Activated CD4-positive, alpha-beta T cell treated with anti-CD3 and anti-CD28 coated beads for 36 hours (primary cell): ENCODE measurements at regions of chr2 and their contacts with region 1.

Region 1: DNA sequence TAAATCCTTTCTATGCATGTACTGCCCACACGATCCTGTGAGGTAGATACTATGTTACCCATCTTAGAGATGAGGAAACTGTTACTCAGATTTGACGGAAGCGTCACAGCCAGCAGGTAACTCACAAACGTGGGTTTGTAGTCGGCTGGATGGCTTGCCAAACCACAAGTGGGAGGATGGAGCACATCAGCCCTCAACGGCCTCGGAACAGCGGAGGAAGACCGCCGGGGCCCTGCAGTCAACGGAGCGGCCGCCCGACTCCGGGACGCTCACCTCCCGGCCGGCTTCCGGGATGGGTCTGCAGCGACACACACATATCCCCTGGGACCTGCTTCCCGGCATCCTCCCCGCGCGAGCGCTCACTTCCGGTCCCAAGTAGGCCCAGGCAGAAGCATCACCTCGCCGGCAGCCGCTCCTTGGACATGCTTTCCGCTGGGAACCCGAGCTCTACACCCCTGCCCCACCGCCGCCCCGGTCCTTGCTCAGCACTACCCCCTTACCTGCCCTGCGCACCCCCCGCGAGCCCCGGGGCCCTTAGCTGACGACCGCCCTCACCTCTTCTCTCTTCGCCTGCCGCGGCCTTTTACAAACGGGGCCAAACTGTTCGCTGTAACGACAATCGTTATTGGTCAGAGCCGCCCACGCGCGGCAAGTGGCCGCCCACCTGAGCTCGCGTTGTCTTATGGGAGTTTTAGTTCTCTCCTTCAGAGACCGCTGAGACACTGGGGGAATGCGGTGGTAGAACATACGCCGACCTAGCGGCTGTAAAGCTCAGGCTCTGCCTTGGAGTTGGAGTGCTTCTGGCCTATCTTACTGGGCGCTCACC is at the start of gene C2orf42:
- DNase-seq: peak; percentile 98
- ATAC-seq: peak; percentile 91
- H3K4me3 Mint-ChIP-seq: peak within 1 kb of the TSS; percentile 84
- H3K27ac Mint-ChIP-seq: peak within 1 kb of the TSS; percentile 97
- H3K4me1 Mint-ChIP-seq: peaks cover 16% of the 10 kb centered on the region
- H3K27me3 Mint-ChIP-seq: no peaks in the 10 kb centered on the region
- total RNA-seq, gene C2orf42: 22.6 to 23.3 TPM

Region 2: GRCh38 chr2:70070541-70071268 is 119.9 kb before region 1 on chr2:
- CTCF ChIA-PET with region 1: interaction called, 3 read pairs
- POLR2A ChIA-PET with region 1: interaction called, 12 read pairs
- intact Hi-C with region 1: loop called (anchors 1 kb)
- DNase-seq: peak; percentile 73
- ATAC-seq: peak; percentile 60
- H3K4me3 Mint-ChIP-seq: peak overlapping the region; percentile 48
- H3K27ac Mint-ChIP-seq: peak overlapping the region; percentile 94
- H3K4me1 Mint-ChIP-seq: peaks cover 51% of the 10 kb centered on the region
- H3K27me3 Mint-ChIP-seq: no peaks in the 10 kb centered on the region

Region 3: DNA sequence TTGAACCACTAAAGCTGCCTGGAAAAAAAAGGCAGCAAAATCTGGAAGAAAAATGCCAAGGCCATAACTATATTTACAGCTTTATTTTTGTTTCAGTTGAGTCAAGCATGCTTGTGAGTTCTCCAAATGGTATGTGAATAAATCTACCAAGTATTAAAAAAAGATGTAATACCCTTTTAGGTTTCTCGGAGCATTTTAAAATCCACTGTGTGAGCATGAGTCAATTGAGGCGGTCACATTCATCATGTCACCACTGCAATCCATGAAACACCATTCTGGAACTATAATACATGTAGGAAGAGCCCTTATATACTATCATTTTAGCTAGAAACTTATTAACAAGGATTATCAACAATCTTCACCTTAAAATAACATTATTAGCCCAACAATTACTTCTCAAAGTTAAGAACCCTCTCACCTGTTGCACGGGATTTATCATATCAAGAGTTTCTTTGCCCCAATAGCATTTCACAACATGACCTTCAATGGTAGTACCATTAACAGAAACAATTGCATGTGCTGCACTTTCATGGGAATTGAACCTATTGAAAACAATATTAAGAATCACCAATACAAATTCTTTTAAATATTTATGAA is 24.4 kb after region 1 on chr2:
- CTCF ChIA-PET with region 1: interaction called, 3 read pairs
- POLR2A ChIA-PET with region 1: interaction called, 12 read pairs
- intact Hi-C with region 1: no loop called
- DNase-seq: no peak
- ATAC-seq: no peak
- H3K4me3 Mint-ChIP-seq: no peak overlapping the region
- H3K27ac Mint-ChIP-seq: no peak overlapping the region
- H3K4me1 Mint-ChIP-seq: peaks cover 31% of the 10 kb centered on the region
- H3K27me3 Mint-ChIP-seq: no peaks in the 10 kb centered on the region

Region 4: GRCh38 chr2:70226781-70227180 is 36.1 kb after region 1 on chr2:
- CTCF ChIA-PET with region 1: interaction called, 5 read pairs
- POLR2A ChIA-PET with region 1: interaction called, 15 read pairs
- intact Hi-C with region 1: no loop called
- DNase-seq: no peak
- ATAC-seq: no peak
- H3K4me3 Mint-ChIP-seq: no peak overlapping the region
- H3K27ac Mint-ChIP-seq: peak overlapping the region; percentile 42
- H3K4me1 Mint-ChIP-seq: peaks cover 12% of the 10 kb centered on the region
- H3K27me3 Mint-ChIP-seq: no peaks in the 10 kb centered on the region

Region 5: GRCh38 chr2:70248181-70248847 is 57.7 kb after region 1 on chr2 and contains the start of gene TIA1:
- CTCF ChIA-PET with region 1: interaction called, 9 read pairs
- POLR2A ChIA-PET with region 1: interaction called, 8 read pairs
- intact Hi-C with region 1: loop called (anchors 1 kb)
- DNase-seq: peak; percentile 99
- ATAC-seq: peak; percentile 98
- H3K4me3 Mint-ChIP-seq: peak within 1 kb of the TSS; percentile 98
- H3K27ac Mint-ChIP-seq: peak within 1 kb of the TSS; percentile 97
- H3K4me1 Mint-ChIP-seq: peaks cover 30% of the 10 kb centered on the region
- H3K27me3 Mint-ChIP-seq: no peaks in the 10 kb centered on the region
- total RNA-seq, gene TIA1: 85.4 to 98.3 TPM

Region 6: DNA sequence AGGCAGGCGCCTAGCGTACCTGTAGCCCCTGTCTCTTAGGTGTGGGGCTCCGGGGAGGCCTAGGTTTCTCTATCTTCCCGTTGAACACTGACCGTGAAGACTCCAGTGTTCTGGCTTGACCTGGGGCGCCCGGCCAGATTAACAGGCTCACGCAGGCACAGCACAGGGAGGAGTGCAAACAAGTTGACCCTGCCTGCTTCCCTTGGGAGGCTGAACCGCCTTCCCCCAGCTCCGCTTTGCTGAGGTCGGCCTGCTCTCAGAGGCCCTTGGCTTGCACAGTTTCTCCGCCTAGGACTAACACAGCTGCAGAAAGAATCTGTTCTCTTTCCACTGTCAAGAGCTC is 67.9 kb after region 1 on chr2:
- CTCF ChIA-PET with region 1: interaction called, 3 read pairs
- POLR2A ChIA-PET with region 1: interaction called, 12 read pairs
- intact Hi-C with region 1: loop called (anchors 1 to 2 kb)
- DNase-seq: no peak
- ATAC-seq: no peak
- H3K4me3 Mint-ChIP-seq: peak overlapping the region; percentile 80
- H3K27ac Mint-ChIP-seq: no peak overlapping the region
- H3K4me1 Mint-ChIP-seq: peaks cover 31% of the 10 kb centered on the region
- H3K27me3 Mint-ChIP-seq: no peaks in the 10 kb centered on the region